H1 (cell line): ENCODE measurements at regions of chr1 and their contacts with region 1.

Region 1: DNA sequence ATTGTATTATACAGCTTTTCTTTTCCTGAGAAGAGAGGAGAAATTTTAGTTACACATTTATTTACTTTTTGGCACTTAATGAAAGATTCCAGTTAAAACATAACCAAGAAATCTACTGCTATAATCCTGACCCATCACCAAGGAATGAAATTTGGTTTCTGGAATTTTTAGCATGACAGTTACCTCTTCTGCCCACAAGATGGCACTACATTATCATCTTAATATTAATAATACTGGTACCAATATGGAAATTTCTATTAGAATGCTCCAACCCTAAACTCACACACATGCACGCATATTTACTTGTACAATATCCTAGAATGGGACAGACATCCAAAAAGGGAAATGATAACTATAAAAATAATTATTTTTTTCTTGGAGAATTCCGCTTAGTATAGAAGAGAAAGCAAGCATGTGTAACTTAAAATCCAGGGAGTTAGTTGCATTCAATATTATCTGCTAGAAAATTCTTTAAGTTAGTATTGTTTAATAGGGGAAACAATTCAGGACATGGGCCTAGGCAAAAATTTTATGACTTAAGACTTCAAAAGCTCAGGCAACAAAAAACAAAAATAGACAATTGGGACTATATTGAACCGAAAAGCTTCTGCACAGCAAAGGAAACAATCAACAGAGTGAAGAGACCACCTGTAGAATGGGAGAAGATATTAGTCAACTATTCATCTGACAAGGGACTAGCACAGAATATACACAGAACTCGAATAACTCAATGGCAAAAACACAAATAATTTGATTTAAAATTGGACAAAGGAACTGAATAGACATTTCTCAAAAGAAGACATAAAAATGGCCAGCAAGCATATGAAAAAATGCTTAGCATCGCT is 37.4 kb downstream of the MAP3K21 start:
- DNase-seq: no peak
- H3K4me3 ChIP-seq: no peak overlapping the region
- H3K27ac ChIP-seq: no peak overlapping the region
- H3K4me1 ChIP-seq: peaks cover 5 to 20% (median 15%) of the 10 kb centered on the region in 4 experiments
- H3K27me3 ChIP-seq: no peaks in the 10 kb centered on the region
- CTCF ChIP-seq: peak in 2 of 3 experiments; percentile 29 to 40; a peak in 2 of 4 replicates
- EP300 ChIP-seq: no peak
- POLR2A ChIP-seq: no peak
- RAD21 ChIP-seq: peak; percentile 53 to 54

Region 2: GRCh38 chr1:233224311-233224710 is 140.6 kb before region 1 on chr1:
- CTCF ChIA-PET with region 1: no interaction called
- POLR2A ChIA-PET with region 1: no interaction called
- DNase-seq: no peak
- H3K4me3 ChIP-seq: no peak overlapping the region
- H3K27ac ChIP-seq: no peak overlapping the region
- H3K4me1 ChIP-seq: no peaks in the 10 kb centered on the region
- H3K27me3 ChIP-seq: no peaks in the 10 kb centered on the region
- CTCF ChIP-seq: no peak
- EP300 ChIP-seq: no peak
- POLR2A ChIP-seq: no peak
- RAD21 ChIP-seq: no peak

Region 3: DNA sequence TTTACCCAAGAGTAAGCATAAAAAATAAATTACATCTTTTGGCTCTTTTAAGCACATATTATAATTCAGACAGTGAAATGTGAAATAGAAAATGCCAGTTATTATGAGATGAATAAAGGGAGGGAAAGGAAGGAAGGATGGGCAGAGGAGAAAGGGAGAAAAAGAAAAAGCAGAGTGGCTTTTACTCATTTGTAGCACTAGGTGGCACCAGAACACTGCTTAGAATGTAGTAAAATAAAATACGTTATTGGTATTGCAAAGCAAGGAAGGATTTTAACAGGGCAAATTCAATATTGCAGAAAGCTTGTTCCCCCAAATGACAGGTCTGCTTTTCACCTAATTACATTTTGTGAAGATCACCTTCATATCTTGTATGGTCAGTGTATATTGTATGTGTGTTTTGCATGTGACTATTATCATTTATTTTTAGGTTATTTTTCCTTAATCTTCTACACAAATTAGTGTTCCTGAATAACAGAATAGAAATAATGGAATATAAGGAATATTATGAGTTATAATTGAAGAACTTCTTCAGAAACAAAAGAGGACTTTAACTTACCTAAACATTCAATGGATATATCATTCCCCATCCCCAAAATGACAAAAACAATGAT is 60.3 kb before region 1 on chr1:
- CTCF ChIA-PET with region 1: interaction called, 13 read pairs
- POLR2A ChIA-PET with region 1: no interaction called
- DNase-seq: no peak
- H3K4me3 ChIP-seq: no peak overlapping the region
- H3K27ac ChIP-seq: no peak overlapping the region
- H3K4me1 ChIP-seq: peaks cover 0 to 3% (median 0%) of the 10 kb centered on the region in 4 experiments; a peak in 1 of 7 replicates
- H3K27me3 ChIP-seq: no peaks in the 10 kb centered on the region
- CTCF ChIP-seq: peak in 2 of 3 experiments; percentile 53 to 75; a peak in 2 of 4 replicates
- EP300 ChIP-seq: no peak
- POLR2A ChIP-seq: no peak
- RAD21 ChIP-seq: peak; percentile 83 to 87

Region 4: GRCh38 chr1:233343262-233343661 is 21.7 kb before region 1 on chr1:
- CTCF ChIA-PET with region 1: interaction called, 10 read pairs
- POLR2A ChIA-PET with region 1: no interaction called
- DNase-seq: no peak
- H3K4me3 ChIP-seq: no peak overlapping the region
- H3K27ac ChIP-seq: no peak overlapping the region
- H3K4me1 ChIP-seq: peaks cover 0 to 6% (median 2%) of the 10 kb centered on the region in 4 experiments; a peak in 2 of 7 replicates
- H3K27me3 ChIP-seq: no peaks in the 10 kb centered on the region
- CTCF ChIP-seq: no peak
- EP300 ChIP-seq: no peak
- POLR2A ChIP-seq: no peak
- RAD21 ChIP-seq: no peak

Region 5: DNA sequence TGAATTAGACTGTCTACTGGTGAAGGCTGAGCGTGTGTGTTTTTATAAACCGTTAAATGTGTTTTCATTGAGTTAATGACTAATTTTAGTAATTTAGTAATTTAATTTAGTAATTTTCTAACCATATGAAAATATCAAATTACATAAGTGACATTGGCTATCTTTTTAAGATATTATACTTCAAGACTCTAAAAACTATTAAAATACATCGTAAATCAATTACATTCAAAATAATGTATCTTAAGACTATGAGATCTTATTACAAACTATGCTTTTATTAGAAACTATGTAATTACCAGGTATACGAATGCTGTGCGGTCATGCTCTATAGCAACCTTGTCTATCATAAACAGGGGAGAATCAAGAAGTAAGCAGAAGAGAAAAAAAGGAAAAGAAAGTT is 15.8 kb before region 1 on chr1:
- CTCF ChIA-PET with region 1: interaction called, 20 read pairs
- POLR2A ChIA-PET with region 1: interaction called, 3 read pairs
- DNase-seq: no peak
- H3K4me3 ChIP-seq: no peak overlapping the region
- H3K27ac ChIP-seq: no peak overlapping the region
- H3K4me1 ChIP-seq: no peaks in the 10 kb centered on the region
- H3K27me3 ChIP-seq: peaks cover 0 to 1% (median 0%) of the 10 kb centered on the region in 4 experiments; a peak in 1 of 7 replicates
- CTCF ChIP-seq: no peak
- EP300 ChIP-seq: no peak
- POLR2A ChIP-seq: no peak
- RAD21 ChIP-seq: no peak

Region 6: GRCh38 chr1:233376382-233377110 is 11.6 kb after region 1 on chr1:
- CTCF ChIA-PET with region 1: interaction called, 14 read pairs
- POLR2A ChIA-PET with region 1: no interaction called
- DNase-seq: no peak
- H3K4me3 ChIP-seq: no peak overlapping the region
- H3K27ac ChIP-seq: no peak overlapping the region
- H3K4me1 ChIP-seq: 0 out of 7 replicates have a peak, but pooled peaks cover 0 to 3% (median 0%) of the 10 kb centered on the region in 4 experiments
- H3K27me3 ChIP-seq: no peaks in the 10 kb centered on the region
- CTCF ChIP-seq: peak in 2 of 3 experiments; percentile 0 to 20; a peak in 2 of 4 replicates
- EP300 ChIP-seq: no peak
- POLR2A ChIP-seq: no peak
- RAD21 ChIP-seq: no peak

Region 7: DNA sequence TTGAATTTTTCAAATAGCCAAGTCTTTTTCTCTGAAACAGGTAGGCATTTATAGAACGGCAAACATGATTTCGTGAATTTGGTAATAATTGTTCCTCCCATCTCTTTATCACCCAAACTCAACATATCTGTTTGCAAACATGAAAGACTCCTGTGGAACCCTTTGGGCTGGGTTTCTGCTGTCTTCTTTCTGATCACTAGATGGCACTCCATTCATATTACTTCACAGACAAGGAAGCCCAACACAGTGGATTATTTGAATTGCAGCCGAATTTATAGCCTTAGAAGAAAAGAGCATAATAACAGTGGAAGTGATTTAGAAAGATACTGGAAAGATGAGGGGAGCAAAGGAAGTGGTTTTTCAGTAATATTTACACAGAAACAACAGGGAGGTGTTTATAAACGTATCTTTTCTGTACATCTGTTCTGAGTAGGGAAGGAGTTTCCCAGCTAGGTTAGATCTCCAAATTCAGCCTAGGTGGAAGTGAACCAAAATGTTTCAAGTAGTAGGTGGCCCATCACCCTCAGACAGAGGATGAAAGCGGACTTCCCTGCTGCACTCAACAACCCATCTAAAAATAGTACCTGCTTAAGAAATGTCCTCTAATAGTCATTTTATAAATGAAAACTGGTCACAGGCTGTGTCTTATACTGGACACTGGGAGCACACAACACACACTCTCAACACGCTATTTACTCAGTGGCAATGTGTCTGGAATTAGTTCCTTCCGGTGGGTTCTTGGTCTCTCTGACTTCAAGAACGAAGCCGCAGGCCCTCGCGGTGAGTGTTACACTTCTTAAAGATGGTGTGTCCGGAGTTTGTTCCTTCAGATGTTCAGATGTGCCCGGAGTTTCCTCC is 30.2 kb after region 1 on chr1:
- CTCF ChIA-PET with region 1: interaction called, 11 read pairs
- POLR2A ChIA-PET with region 1: no interaction called
- DNase-seq: no peak
- H3K4me3 ChIP-seq: no peak overlapping the region
- H3K27ac ChIP-seq: no peak overlapping the region
- H3K4me1 ChIP-seq: peaks cover 0 to 4% (median 0%) of the 10 kb centered on the region in 4 experiments; a peak in 2 of 7 replicates
- H3K27me3 ChIP-seq: no peaks in the 10 kb centered on the region
- CTCF ChIP-seq: peak in 2 of 3 experiments; percentile 73 to 79; a peak in 3 of 4 replicates
- EP300 ChIP-seq: no peak
- POLR2A ChIP-seq: no peak
- RAD21 ChIP-seq: peak; percentile 94 to 96